K562 (cell line): ENCODE measurements at regions of chrX and their contacts with region 1.

Region 1: DNA sequence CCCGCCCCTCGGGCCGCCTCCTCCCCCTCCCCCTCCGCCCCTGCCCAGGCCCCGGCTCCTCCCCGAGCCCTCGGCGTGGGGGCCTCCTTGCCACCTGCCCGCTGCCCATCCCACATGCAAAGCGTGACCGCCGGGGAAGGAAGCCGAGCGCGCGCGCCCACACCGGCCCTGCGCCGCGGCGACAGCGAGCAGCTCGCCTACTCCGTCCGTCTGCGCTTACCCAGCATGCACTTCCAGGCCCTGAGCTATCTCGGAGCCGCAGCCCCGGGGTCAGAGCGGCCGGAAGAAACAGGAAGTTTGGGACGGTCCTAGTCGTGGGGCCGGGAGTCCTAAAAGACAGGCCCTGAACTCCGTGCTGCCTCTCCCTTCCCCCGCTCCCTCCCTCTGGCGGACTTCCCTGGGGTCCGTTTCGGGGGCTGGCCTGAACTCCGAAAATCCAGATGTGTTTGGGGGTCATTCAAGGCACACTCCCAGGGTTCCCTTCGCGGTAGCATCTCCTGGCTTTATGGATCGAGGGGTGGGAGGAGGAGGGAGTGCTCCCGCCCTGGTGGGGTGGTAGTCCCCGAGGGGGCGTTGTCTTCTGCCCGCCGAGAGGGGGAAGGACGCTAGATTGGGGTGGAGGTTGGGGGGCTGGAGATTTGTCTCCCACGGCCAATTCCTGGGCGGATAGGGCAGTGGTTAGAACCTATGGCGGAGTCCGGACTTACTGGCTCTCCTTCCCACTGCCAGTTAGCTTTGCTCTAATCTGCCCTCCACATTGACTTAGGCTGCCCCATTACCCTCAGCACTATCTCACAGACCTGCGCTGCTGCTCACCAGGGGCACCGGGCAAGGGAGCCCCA is 25.0 kb upstream of the BCORL1 start:
- DNase-seq: peak; percentile 80 to 90 (median 86)
- ATAC-seq: peak; percentile 84
- H3K4me3 ChIP-seq: peak overlapping the region; percentile 37
- H3K27ac ChIP-seq: peak overlapping the region; percentile 94
- H3K4me1 ChIP-seq: peaks cover 40 to 51% of the 10 kb centered on the region in 2 experiments
- H3K27me3 ChIP-seq: no peaks in the 10 kb centered on the region
- CTCF ChIP-seq: no peak
- EP300 ChIP-seq: peak; percentile 46; the same call in 1 of the 2 replicates
- POLR2A ChIP-seq: peak; percentile 80
- RAD21 ChIP-seq: 0 out of 4 replicates have a peak, but pooled peaks of 1 of the 2 experiments have one; percentile 3

Region 2: DNA sequence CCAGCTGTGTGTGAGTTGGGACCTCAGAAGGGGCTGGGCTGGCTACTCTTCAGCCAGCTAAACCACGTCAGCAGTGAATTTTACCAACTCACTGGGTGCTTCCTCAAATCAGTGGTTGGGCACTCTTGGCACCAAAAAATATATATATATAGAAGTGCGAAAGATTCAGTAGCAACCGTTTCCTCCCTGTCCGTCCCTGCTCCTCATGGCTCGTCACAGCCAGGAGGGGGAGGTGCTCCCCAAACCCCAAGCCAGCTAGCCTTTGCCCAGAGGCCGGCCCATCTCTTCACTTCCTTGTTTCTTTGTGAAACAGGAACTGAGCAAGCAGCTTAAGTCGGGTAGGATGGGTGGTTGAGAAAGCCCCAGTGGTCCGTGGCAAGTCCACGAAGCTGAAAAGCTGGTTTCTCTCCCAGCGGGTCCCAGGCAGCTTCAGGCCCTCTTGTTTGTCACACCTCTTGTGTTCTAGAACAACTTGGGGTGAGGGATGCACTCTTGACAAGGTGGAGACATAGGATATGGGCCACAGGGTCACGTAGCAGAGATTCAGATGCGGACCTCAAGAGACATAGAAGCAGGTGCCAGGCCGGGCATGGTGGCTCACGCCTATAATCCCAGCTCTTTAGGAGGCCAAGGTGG is 184.5 kb before region 1 on chrX:
- CTCF ChIA-PET with region 1: no interaction called
- POLR2A ChIA-PET with region 1: no interaction called
- in situ Hi-C with region 1: no loop called
- intact Hi-C with region 1: no loop called
- DNase-seq: no peak
- ATAC-seq: peak; percentile 65; the same call in 2 of the 3 replicates
- H3K4me3 ChIP-seq: no peak overlapping the region
- H3K27ac ChIP-seq: no peak overlapping the region
- H3K4me1 ChIP-seq: peaks cover 0 to 6% of the 10 kb centered on the region in 2 experiments; a peak in 2 of 5 replicates
- H3K27me3 ChIP-seq: no peaks in the 10 kb centered on the region
- CTCF ChIP-seq: peak in 1 of 3 experiments; percentile 13; a peak in 2 of 6 replicates
- EP300 ChIP-seq: no peak
- POLR2A ChIP-seq: no peak
- RAD21 ChIP-seq: 0 out of 4 replicates have a peak, but pooled peaks of 1 of the 2 experiments have one; percentile 11

Region 3: GRCh38 chrX:129931411-129932015 is 25.9 kb before region 1 on chrX:
- CTCF ChIA-PET with region 1: no interaction called
- POLR2A ChIA-PET with region 1: interaction called, 5 read pairs
- in situ Hi-C with region 1: no loop called
- intact Hi-C with region 1: loop called (anchors 1 kb)
- DNase-seq: peak; percentile 90 to 94 (median 92)
- ATAC-seq: peak; percentile 90
- H3K4me3 ChIP-seq: peak overlapping the region; percentile 65
- H3K27ac ChIP-seq: peak overlapping the region; percentile 82
- H3K4me1 ChIP-seq: peaks cover 4 to 19% of the 10 kb centered on the region in 2 experiments; a peak in 3 of 5 replicates
- H3K27me3 ChIP-seq: no peaks in the 10 kb centered on the region
- CTCF ChIP-seq: no peak
- EP300 ChIP-seq: no peak
- POLR2A ChIP-seq: peak; percentile 67
- RAD21 ChIP-seq: no peak

Region 4: DNA sequence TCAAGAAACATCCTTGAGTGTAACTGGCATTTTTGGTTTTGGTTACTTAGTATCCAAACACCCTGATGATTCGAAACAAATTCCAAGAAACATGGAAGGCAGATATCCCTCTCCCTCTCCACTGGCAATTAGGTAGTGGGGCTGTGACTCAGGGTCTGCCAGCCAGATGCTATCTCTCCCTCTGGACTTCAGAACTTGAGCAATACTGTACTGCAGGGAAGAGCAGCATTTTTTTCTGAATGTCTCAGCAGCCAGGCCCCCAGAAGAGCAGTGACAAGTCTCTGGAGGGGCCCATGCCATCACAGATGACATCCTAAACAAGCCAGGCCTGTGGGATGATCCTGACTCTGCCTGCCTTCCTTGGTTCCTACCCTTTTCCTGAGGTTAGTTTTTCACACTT is 12.3 kb before region 1 on chrX:
- CTCF ChIA-PET with region 1: no interaction called
- POLR2A ChIA-PET with region 1: interaction called, 11 read pairs
- in situ Hi-C with region 1: no loop called
- intact Hi-C with region 1: no loop called
- DNase-seq: no peak
- ATAC-seq: no peak
- H3K4me3 ChIP-seq: no peak overlapping the region
- H3K27ac ChIP-seq: no peak overlapping the region
- H3K4me1 ChIP-seq: peaks cover 0 to 3% of the 10 kb centered on the region in 2 experiments; a peak in 2 of 5 replicates
- H3K27me3 ChIP-seq: no peaks in the 10 kb centered on the region
- CTCF ChIP-seq: no peak
- EP300 ChIP-seq: no peak
- POLR2A ChIP-seq: no peak
- RAD21 ChIP-seq: no peak

Region 5: DNA sequence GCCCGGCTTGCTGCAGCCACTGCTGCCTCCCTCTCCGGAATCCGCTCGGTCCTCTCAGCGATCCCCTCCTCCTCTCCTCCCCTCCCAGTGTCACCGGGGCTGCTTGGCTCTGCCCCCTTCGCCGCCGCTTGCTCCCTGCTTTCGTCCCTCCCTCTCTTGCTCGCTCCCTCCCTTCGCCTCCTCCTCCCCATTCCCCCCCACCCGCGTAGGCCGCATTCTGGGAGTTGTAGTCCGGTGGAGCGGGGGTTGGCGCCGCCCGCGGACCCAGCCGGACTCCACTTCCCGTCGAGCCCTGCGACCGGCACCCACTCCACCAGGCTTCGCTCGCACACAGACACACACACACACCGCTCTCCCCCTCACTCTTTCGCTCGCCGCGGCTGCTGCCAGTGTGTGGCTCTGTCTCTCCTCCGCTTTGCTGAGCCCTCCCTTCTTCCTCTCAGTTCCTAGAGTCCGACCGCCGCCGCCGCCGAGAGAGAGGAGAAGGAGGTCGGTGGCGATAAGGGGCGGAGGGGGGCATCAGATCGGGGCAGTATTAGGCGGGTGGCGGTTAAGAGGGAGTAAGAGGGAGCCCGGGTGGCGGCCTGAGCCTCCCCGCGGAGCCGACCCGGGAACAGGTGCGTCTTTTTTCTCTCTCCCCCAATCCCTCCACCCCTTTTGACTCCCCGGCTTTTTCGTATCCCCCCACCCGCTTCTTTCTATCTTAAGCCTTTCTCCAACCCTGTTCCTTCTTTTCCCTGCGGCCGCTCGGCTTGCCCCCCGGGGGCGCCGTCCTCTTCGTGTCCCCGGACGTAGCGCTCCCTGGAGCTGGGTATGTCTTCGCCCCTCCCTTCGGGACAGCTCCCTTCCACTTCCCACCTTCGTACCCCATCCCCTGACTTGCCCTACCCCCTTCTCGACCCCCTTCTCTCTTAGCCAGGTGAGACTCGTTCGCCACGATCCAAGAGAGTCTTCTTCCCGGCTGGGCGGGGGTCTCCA is 25.1 kb after region 1 on chrX and contains the start of gene BCORL1:
- CTCF ChIA-PET with region 1: no interaction called
- POLR2A ChIA-PET with region 1: interaction called, 4 read pairs
- in situ Hi-C with region 1: no loop called
- intact Hi-C with region 1: loop called (anchors 1 kb)
- DNase-seq: peak; percentile 87 to 96 (median 92)
- ATAC-seq: peak; percentile 94
- H3K4me3 ChIP-seq: no peak within 1 kb of the TSS
- H3K27ac ChIP-seq: peak within 1 kb of the TSS; percentile 61
- H3K4me1 ChIP-seq: peaks cover 10 to 29% of the 10 kb centered on the region in 2 experiments; a peak in 4 of 5 replicates
- H3K27me3 ChIP-seq: no peaks in the 10 kb centered on the region
- CTCF ChIP-seq: peak; percentile 23 to 26 (median 25); a peak in 2 of 6 replicates
- EP300 ChIP-seq: peak; percentile 31; the same call in 1 of the 2 replicates
- POLR2A ChIP-seq: peak; percentile 95
- RAD21 ChIP-seq: no peak
- polyA plus RNA-seq, gene BCORL1: 0.48 to 0.55 TPM

Region 6: DNA sequence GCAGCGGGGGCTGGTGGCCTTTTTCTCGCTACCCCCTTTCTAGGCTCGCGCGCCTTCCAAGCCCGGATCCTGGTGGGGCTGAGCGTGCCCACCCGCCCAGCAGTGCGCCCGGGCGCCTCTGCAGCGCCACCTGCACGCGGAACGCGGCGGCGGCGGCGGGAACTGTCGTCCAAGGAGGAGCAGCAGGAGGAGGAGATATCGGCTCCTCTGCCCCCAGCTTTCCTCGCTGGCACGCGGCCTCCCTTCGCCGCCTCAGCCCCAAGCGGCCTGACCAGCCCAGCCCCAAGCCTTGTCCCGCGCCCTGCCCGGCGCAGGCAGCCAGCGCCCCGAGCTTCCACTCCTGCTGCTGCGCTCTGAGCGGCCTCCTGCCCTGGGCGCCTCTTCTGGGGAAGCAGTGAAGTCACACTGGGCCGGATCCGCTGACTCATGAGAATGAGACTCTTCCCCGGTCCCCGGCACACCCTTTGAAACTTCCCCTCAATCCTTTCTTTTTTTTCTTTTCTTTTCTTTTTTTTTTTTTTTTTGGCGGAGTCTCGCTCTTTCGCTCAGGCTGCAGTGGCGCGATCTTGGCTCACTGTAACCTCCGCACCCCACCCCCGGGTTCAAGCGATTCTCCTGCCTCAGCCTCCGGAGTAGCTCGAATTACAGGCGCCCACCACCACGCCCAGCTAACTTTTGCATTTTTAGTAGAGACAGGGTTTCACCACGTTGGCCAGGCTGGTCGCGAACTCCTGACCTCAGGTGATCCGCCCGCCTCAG is 163.5 kb after region 1 on chrX:
- CTCF ChIA-PET with region 1: no interaction called
- POLR2A ChIA-PET with region 1: no interaction called
- in situ Hi-C with region 1: no loop called
- intact Hi-C with region 1: no loop called
- DNase-seq: peak; percentile 74 to 83 (median 78)
- ATAC-seq: peak; percentile 91
- H3K4me3 ChIP-seq: peak overlapping the region; percentile 34
- H3K27ac ChIP-seq: peak overlapping the region; percentile 86
- H3K4me1 ChIP-seq: peaks cover 39 to 53% of the 10 kb centered on the region in 2 experiments; a peak in 4 of 5 replicates
- H3K27me3 ChIP-seq: no peaks in the 10 kb centered on the region
- CTCF ChIP-seq: peak; percentile 58 to 81 (median 77)
- EP300 ChIP-seq: no peak
- POLR2A ChIP-seq: peak; percentile 74
- RAD21 ChIP-seq: peak; percentile 55 to 64

Region 7: GRCh38 chrX:130933358-130933757 is 975.9 kb after region 1 on chrX:
- CTCF ChIA-PET with region 1: no interaction called
- POLR2A ChIA-PET with region 1: no interaction called
- in situ Hi-C with region 1: no loop called
- intact Hi-C with region 1: no loop called
- DNase-seq: no peak
- ATAC-seq: no peak
- H3K4me3 ChIP-seq: no peak overlapping the region
- H3K27ac ChIP-seq: no peak overlapping the region
- H3K4me1 ChIP-seq: no peaks in the 10 kb centered on the region
- H3K27me3 ChIP-seq: no peaks in the 10 kb centered on the region
- CTCF ChIP-seq: no peak
- EP300 ChIP-seq: no peak
- POLR2A ChIP-seq: no peak
- RAD21 ChIP-seq: no peak